HAP-1 (cell line): ENCODE measurements at regions of chr11 and their contacts with region 1.

Region 1: GRCh38 chr11:27158722-27159679 is 118.4 kb downstream of the BBOX1 start:
- DNase-seq: peak; percentile 40 to 67
- H3K4me3 ChIP-seq: no peak overlapping the region
- H3K4me1 ChIP-seq: no peaks in the 10 kb centered on the region
- H3K27me3 ChIP-seq: peaks cover 4% of the 10 kb centered on the region; the same call in 1 of the 2 replicates

Region 2: DNA sequence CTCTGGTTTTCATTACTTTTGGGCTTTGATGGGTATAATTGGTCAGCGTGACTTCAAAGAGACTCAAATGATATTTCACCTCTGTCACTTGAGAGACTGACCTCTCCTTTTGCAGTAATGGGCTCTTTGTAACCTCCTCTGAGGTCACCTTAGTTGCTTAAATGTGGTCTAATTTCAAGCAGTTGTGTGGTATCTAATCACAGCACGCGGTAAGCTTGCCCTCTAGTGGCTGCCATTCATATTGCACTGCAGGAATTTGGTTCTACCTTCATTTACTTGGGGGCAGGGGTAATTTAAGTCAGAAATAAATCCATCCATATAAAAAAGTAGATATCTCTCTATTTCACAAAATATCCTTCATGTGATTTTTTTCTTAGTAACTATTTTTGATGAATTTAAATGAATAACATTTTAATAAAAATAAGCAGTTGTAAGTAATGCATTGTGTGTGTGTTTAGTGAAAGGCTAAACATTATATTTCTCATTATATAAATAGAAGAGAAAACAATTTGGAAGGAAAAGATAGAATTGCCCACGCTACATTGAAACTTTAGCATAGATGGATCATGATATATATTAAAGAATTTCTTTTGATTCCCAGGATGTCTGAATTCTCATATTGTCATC is 882.1 kb before region 1 on chr11:
- in situ Hi-C with region 1: loop called (anchors 25 kb)
- DNase-seq: peak; percentile 36 to 74
- H3K4me3 ChIP-seq: no peak overlapping the region
- H3K4me1 ChIP-seq: no peaks in the 10 kb centered on the region
- H3K27me3 ChIP-seq: no peaks in the 10 kb centered on the region

Region 3: GRCh38 chr11:26753723-26754504 is 405.1 kb before region 1 on chr11:
- in situ Hi-C with region 1: loop called (anchors 25 kb)
- DNase-seq: peak; percentile 27 to 37
- H3K4me3 ChIP-seq: no peak overlapping the region
- H3K4me1 ChIP-seq: no peaks in the 10 kb centered on the region
- H3K27me3 ChIP-seq: no peaks in the 10 kb centered on the region; the same call in 1 of the 2 replicates

Region 4: DNA sequence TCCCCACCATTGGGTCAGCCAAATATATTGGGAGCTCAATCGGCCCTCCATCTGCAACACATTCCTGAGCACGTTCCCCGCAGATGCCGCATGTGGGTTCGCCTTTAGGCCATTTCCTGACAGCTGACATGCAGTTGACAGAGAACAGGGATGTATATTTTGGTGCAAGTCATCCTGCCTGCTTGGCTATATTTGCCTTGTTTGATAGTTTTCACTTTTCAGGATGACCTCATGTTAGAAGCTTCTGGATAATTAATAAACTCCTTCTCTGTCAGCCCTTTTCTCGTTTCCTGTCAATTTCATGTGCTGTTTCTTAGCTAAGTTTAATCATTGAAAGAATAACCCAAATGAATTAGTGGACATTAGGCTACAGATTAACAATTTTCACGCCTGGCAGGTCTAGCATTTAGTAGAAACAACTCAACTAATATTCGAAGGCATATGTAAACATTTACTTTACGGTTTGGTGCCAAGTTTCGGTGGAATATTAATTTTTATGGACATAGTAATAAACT is 331.4 kb before region 1 on chr11:
- in situ Hi-C with region 1: no loop called
- DNase-seq: no peak
- H3K4me3 ChIP-seq: no peak overlapping the region
- H3K4me1 ChIP-seq: no peaks in the 10 kb centered on the region
- H3K27me3 ChIP-seq: no peaks in the 10 kb centered on the region

Region 5: GRCh38 chr11:27347361-27348339 is 188.6 kb after region 1 on chr11:
- in situ Hi-C with region 1: no loop called
- DNase-seq: peak; percentile 72 to 98
- H3K4me3 ChIP-seq: no peak overlapping the region
- H3K4me1 ChIP-seq: peaks cover 23% of the 10 kb centered on the region
- H3K27me3 ChIP-seq: no peaks in the 10 kb centered on the region